ENCODE measurements at regions of chr11 and their contacts with region 1.

Region 1: GRCh38 chr11:65013692-65014145 is 241 bp upstream of the ARL2 start:
- DNase-seq: peak; percentile 95
- ATAC-seq: peak; percentile 82
- H3K4me3 Mint-ChIP-seq: peak overlapping the region; percentile 78
- H3K27ac Mint-ChIP-seq: peak overlapping the region; percentile 92
- H3K4me1 Mint-ChIP-seq: peaks cover 18% of the 10 kb centered on the region
- H3K27me3 Mint-ChIP-seq: no peaks in the 10 kb centered on the region
- CTCF ChIP-seq: 0 out of 2 replicates have a peak, but pooled peaks have one; percentile 47

Region 2: DNA sequence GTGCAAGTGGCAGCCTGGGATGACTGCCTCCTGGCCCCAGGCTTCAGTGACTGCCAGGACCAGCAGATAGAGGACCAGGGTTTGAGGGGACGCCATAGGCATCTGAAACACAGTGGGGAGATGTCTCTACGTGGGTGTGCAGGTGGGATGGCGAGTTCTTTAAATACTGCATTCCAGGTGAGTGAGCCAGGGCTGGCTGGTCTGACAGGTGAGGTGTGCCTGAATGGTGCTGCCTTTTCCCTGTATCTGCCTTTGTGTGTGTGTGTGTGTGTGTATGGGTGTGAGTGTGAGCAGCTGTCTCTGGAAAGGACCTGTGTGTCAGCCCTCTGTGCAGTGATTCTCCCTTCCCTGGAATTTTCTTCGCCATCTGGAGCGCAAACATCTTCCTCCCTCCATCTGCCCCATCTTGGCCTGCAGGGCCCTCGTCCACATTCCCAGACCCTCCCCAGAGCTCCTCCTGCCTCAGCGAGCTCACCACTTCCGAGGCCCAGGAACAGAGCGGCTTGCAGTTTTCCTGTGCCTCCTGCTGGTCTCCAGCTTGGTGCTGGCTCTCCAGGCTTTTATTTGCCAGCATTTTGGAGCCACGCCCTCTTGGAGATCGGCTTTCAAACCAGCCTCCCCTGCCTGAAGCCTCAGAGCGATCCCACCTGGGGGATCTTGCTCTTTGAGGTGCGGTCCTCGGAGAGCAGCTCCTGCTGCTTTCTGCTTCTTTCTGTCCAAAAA is 78.2 kb before region 1 on chr11 and contains the start of gene GPHA2:
- CTCF ChIA-PET with region 1: interaction called, 11 read pairs
- POLR2A ChIA-PET with region 1: no interaction called
- DNase-seq: peak; percentile 80
- ATAC-seq: peak; percentile 88
- H3K4me3 Mint-ChIP-seq: peak within 1 kb of the TSS; percentile 50
- H3K27ac Mint-ChIP-seq: peak within 1 kb of the TSS; percentile 90
- H3K4me1 Mint-ChIP-seq: peaks cover 24% of the 10 kb centered on the region
- H3K27me3 Mint-ChIP-seq: no peaks in the 10 kb centered on the region
- CTCF ChIP-seq: no peak
- total RNA-seq, gene GPHA2: 1.0 to 1.6 TPM (median 1.6 TPM) in 3 replicates

Region 3: GRCh38 chr11:64996710-64997380 is 16.9 kb before region 1 on chr11 and contains the start of gene BATF2:
- CTCF ChIA-PET with region 1: interaction called, 29 read pairs
- POLR2A ChIA-PET with region 1: interaction called, 3 read pairs
- DNase-seq: peak; percentile 76
- ATAC-seq: peak; percentile 97
- H3K4me3 Mint-ChIP-seq: peak within 1 kb of the TSS; percentile 56
- H3K27ac Mint-ChIP-seq: peak within 1 kb of the TSS; percentile 78
- H3K4me1 Mint-ChIP-seq: peaks cover 18% of the 10 kb centered on the region
- H3K27me3 Mint-ChIP-seq: no peaks in the 10 kb centered on the region
- CTCF ChIP-seq: no peak
- total RNA-seq, gene BATF2: 1.3 to 3.2 TPM (median 2.2 TPM) in 3 replicates

Region 4: DNA sequence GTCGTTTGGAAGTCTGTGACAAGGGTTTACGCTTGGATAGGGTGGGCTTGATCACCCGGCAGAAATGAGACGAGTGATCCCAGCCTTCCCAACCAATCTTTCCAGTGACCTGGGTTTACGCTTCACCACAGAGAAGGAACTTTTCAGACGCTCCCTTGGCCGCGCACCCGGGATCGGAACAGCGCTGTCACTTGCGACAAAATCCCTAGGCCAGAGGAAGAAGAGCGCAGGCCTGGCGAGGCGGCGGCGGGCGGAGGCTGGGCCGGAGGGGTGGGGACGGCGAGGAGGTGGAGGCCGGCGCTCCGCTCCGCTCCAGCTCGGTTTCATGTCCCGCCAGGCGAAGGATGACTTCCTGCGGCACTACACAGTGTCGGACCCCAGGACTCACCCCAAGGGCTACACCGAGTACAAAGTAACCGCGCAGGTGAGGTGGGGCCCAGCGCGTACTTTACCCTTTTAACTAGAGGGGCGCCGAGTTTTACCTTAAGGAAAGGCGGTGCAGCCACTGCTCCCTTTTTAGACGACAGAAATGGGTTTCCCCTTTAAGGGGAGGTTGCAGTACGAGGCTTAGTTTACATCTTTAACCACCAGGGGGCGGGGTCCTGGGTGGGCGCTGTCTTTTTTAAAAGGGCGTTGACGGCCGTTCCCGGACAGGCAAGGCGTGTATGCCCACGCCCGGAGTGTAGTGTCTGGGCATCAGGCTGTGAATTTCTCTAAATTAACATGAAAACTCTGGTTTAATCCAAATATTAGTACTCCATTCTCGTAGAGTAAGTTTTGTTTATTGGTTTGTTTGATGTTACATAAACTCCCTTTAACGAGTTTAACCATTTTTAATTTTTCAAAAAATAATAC is 13.7 kb after region 1 on chr11 and contains the start of gene SNX15:
- CTCF ChIA-PET with region 1: interaction called, 23 read pairs
- POLR2A ChIA-PET with region 1: no interaction called
- DNase-seq: peak; percentile 89
- ATAC-seq: peak; percentile 86
- H3K4me3 Mint-ChIP-seq: peak within 1 kb of the TSS; percentile 67
- H3K27ac Mint-ChIP-seq: 0 out of 2 replicates have a peak within 1 kb of the TSS, but pooled peaks have one; percentile 44
- H3K4me1 Mint-ChIP-seq: peaks cover 9% of the 10 kb centered on the region
- H3K27me3 Mint-ChIP-seq: peaks cover 5% of the 10 kb centered on the region
- CTCF ChIP-seq: peak; percentile 74; the same call in 1 of the 2 replicates
- total RNA-seq, gene SNX15: 16.7 to 19.6 TPM (median 17.6 TPM) in 3 replicates

Region 5: GRCh38 chr11:65066805-65067554 is 53.3 kb after region 1 on chr11:
- CTCF ChIA-PET with region 1: interaction called, 10 read pairs
- POLR2A ChIA-PET with region 1: no interaction called
- DNase-seq: peak; percentile 73
- ATAC-seq: peak; percentile 87
- H3K4me3 Mint-ChIP-seq: peak overlapping the region; percentile 49
- H3K27ac Mint-ChIP-seq: peak overlapping the region; percentile 91
- H3K4me1 Mint-ChIP-seq: peaks cover 23% of the 10 kb centered on the region
- H3K27me3 Mint-ChIP-seq: no peaks in the 10 kb centered on the region; the same call in 1 of the 2 replicates
- CTCF ChIP-seq: no peak

Region 6: GRCh38 chr11:65117216-65118096 is 103.7 kb after region 1 on chr11 and contains the start of gene ZNHIT2:
- CTCF ChIA-PET with region 1: interaction called, 37 read pairs
- POLR2A ChIA-PET with region 1: interaction called, 3 read pairs
- DNase-seq: peak; percentile 100
- ATAC-seq: peak; percentile 69
- H3K4me3 Mint-ChIP-seq: peak within 1 kb of the TSS; percentile 86
- H3K27ac Mint-ChIP-seq: peak within 1 kb of the TSS; percentile 100
- H3K4me1 Mint-ChIP-seq: peaks cover 22% of the 10 kb centered on the region
- H3K27me3 Mint-ChIP-seq: no peaks in the 10 kb centered on the region
- CTCF ChIP-seq: peak; percentile 91
- total RNA-seq, gene ZNHIT2: 15.9 to 18.3 TPM (median 16.7 TPM) in 3 replicates

Measured in WTC11 (cell line).